Naive thymus-derived CD4-positive, alpha-beta T cell (primary cell): ENCODE measurements at regions of chr22 and their contacts with region 1.

Region 1: GRCh38 chr22:21867528-21868266 is at the start of gene MAPK1:
- DNase-seq: peak; percentile 88 to 96 (median 92)
- ATAC-seq: peak; percentile 99
- H3K4me3 ChIP-seq: peak within 1 kb of the TSS; percentile 73
- H3K4me3 Mint-ChIP-seq: peak within 1 kb of the TSS; percentile 87 to 99 (median 98)
- H3K27ac ChIP-seq: peak within 1 kb of the TSS; percentile 88
- H3K27ac Mint-ChIP-seq: peak within 1 kb of the TSS; percentile 89 to 99 (median 95)
- H3K4me1 ChIP-seq: peaks cover 23 to 36% of the 10 kb centered on the region in 2 donors
- H3K4me1 Mint-ChIP-seq: peaks cover 36 to 52% (median 47%) of the 10 kb centered on the region in 7 donors
- H3K27me3 ChIP-seq: no peaks in the 10 kb centered on the region
- H3K27me3 Mint-ChIP-seq: peaks cover 0 to 16% (median 0%) of the 10 kb centered on the region in 5 donors
- total RNA-seq, gene MAPK1: 68.9 to 120 (median 105) TPM

Region 2: DNA sequence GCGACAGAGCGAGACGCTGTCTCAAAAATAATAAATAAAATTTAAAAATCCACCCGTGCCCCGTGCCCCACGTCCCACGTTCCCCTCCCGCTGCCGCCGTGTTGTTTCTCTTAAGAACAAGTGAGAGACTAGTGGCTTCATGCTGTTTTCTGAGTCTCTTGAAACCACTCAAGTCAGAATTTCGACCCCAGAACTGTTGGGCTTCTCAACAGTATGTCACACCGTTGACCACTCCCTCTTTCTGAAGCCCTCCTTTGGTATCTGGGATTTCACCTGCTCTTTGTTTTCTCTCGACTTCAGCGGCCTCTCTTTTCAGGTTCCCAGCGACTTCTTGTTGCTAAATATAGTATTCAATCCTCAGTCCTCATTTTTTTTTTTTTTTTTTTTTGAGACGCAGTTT is 200.9 kb before region 1 on chr22:
- CTCF ChIA-PET with region 1: no interaction called
- POLR2A ChIA-PET with region 1: no interaction called
- intact Hi-C with region 1: loop called in 1 of 2 experiments (anchors 5 kb)
- DNase-seq: no peak
- ATAC-seq: no peak
- H3K4me3 ChIP-seq: peak overlapping the region; percentile 99
- H3K4me3 Mint-ChIP-seq: peak overlapping the region; percentile 95 to 100 (median 98)
- H3K27ac ChIP-seq: peak overlapping the region; percentile 86
- H3K27ac Mint-ChIP-seq: peak overlapping the region; percentile 79 to 99 (median 97)
- H3K4me1 ChIP-seq: peaks cover 6 to 16% of the 10 kb centered on the region in 2 donors
- H3K4me1 Mint-ChIP-seq: peaks cover 29 to 45% (median 42%) of the 10 kb centered on the region in 7 donors
- H3K27me3 ChIP-seq: no peaks in the 10 kb centered on the region
- H3K27me3 Mint-ChIP-seq: peaks cover 0 to 2% (median 0%) of the 10 kb centered on the region in 5 donors

Region 3: DNA sequence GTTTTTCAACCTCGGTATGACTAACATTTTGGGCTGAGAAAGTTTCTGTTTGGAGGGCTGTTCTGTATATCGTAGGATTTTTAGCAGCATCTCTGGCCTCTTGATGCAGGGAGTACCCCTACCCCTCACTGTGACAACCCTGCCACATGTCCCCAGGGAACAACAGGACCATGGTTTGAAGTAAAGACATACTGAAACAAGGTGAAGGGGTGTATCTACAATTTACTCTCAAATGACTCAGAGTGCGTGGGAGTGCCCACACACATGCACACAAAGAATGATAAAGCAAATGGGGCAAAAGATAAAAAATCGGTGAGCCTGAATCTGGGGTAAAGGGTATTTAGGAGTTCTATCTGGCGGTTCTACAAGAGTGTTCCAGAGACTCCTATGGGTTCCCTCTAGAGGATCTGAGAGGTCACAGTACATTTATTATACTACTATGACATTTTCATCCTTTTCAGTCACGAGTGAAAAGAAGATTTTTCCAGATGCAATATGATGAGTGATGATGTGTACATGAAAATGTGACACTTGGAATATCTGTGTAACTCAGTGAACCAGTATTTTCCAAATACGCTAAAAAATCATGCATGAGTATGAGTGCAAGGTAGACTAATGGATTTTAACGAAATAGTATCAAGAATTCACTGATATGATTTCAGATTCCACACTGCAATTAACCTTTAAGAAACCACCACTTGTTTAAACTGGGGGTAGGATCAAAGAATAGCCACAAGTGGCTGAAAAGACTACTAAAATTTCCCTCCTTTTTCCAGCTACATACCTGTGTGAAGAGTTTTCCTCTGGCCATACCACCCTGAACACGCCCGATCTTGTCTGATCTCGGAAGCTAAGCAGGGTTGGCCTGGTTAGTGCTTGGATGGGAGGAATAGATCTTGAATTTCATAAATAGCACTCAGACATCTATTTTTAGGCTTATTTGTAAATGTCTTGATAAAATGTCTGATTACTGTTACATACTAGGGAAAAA is 75.8 kb before region 1 on chr22:
- CTCF ChIA-PET with region 1: no interaction called
- POLR2A ChIA-PET with region 1: no interaction called
- intact Hi-C with region 1: loop called in 1 of 2 experiments (anchors 5 kb)
- DNase-seq: peak in 1 of 9 donors; percentile 53
- ATAC-seq: no peak
- H3K4me3 ChIP-seq: no peak overlapping the region
- H3K4me3 Mint-ChIP-seq: no peak overlapping the region
- H3K27ac ChIP-seq: no peak overlapping the region
- H3K27ac Mint-ChIP-seq: peak overlapping the region in 5 of 9 donors; percentile 2 to 61 (median 36)
- H3K4me1 ChIP-seq: no peaks in the 10 kb centered on the region
- H3K4me1 Mint-ChIP-seq: peaks cover 0 to 12% (median 0%) of the 10 kb centered on the region in 7 donors
- H3K27me3 ChIP-seq: no peaks in the 10 kb centered on the region
- H3K27me3 Mint-ChIP-seq: no peaks in the 10 kb centered on the region

Region 4: DNA sequence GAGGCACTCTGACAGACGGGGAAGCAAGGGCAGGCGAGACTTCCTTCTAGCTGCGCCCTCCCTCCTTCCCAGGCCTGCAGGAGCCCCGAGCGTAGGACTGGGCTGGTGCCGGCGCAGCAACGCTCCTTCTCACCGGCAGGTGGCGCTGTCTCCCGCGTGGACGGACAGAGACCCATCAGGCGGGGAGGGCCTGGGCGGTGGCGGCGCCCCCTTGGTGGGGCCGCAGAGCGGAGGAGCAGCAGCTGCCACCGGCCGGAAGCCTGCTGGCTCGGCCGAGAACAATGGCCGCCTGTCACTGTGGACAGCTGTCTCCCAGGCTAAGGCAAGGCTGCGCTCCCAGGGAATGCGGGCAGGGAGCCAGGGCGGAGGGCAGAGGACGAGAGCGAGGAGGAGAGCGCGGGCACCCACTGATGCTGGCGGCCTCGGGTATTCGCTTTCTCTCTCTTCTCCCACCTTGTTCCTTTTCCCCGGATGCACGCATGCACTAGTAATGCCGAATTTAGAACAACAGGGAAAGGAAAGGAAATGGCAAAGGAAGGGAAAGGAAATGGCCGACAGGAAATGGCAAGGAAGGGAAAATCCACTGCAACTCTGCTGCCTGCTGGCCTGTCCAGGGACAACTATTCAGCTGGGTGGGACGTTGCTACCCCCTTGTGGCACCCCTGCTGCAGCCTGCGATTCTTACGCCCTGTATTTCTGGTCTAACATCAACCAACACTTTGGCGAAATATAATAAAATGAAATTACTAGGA is 70.5 kb after region 1 on chr22:
- CTCF ChIA-PET with region 1: no interaction called
- POLR2A ChIA-PET with region 1: no interaction called
- intact Hi-C with region 1: loop called in 1 of 2 experiments (anchors 1 kb)
- DNase-seq: peak; percentile 76 to 95 (median 87)
- ATAC-seq: peak; percentile 94
- H3K4me3 ChIP-seq: peak overlapping the region; percentile 69
- H3K4me3 Mint-ChIP-seq: peak overlapping the region; percentile 72 to 84 (median 80)
- H3K27ac ChIP-seq: peak overlapping the region; percentile 60
- H3K27ac Mint-ChIP-seq: peak overlapping the region; percentile 33 to 90 (median 81)
- H3K4me1 ChIP-seq: peaks cover 12 to 13% of the 10 kb centered on the region in 2 donors
- H3K4me1 Mint-ChIP-seq: peaks cover 20 to 55% (median 48%) of the 10 kb centered on the region in 7 donors
- H3K27me3 ChIP-seq: no peaks in the 10 kb centered on the region
- H3K27me3 Mint-ChIP-seq: no peaks in the 10 kb centered on the region